Right ventricle myocardium inferior (tissue), 1 donor: ENCODE measurements at regions of chr1 and their contacts with region 1.

Region 1: DNA sequence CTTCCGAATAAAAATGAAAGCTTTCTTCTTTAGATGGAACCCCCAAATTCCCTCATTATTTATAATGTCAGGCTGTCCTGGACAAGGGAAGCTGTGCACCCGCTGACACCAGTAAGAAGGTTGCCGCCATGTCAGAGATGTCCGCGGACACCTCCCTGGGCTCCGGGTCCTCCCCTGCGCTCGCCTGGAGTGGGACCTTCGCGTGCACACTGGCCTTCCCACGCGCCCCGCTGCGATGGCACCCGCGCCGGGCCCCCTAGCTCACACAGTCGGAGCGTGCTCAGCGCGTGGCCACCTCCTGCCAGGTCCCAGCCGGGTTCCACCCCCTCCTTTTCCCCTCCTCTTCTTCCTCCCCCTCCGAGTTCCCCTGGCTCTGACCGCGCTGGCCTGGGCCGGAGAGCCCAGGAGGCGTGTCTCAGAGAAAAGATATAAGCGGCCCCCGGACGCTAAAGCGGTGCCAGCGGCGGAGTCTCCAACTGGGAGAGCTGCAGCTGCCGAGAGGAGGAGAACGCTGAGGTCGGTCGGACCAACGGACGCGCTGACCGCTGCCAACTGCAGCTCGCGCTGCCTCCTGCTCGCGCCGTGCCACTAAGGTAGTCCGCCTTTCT is at the start of gene G0S2:
- DNase-seq: peak; percentile 92
- ATAC-seq: peak; percentile 92
- total RNA-seq, gene G0S2: 460 TPM

Region 2: GRCh38 chr1:209643285-209644020 is 31.6 kb before region 1 on chr1:
- intact Hi-C with region 1: loop called (anchors 1 kb)
- DNase-seq: peak; percentile 82
- ATAC-seq: peak; percentile 79